ENCODE measurements at regions of chr14 and their contacts with region 1.

Region 1: GRCh38 chr14:52299692-52300278 is 14.3 kb upstream of the PTGER2 start:
- DNase-seq: no peak
- H3K4me3 Mint-ChIP-seq: no peak overlapping the region
- H3K27ac Mint-ChIP-seq: no peak overlapping the region
- H3K4me1 Mint-ChIP-seq: peaks cover 62% of the 10 kb centered on the region
- H3K27me3 Mint-ChIP-seq: peaks cover 16% of the 10 kb centered on the region

Region 2: DNA sequence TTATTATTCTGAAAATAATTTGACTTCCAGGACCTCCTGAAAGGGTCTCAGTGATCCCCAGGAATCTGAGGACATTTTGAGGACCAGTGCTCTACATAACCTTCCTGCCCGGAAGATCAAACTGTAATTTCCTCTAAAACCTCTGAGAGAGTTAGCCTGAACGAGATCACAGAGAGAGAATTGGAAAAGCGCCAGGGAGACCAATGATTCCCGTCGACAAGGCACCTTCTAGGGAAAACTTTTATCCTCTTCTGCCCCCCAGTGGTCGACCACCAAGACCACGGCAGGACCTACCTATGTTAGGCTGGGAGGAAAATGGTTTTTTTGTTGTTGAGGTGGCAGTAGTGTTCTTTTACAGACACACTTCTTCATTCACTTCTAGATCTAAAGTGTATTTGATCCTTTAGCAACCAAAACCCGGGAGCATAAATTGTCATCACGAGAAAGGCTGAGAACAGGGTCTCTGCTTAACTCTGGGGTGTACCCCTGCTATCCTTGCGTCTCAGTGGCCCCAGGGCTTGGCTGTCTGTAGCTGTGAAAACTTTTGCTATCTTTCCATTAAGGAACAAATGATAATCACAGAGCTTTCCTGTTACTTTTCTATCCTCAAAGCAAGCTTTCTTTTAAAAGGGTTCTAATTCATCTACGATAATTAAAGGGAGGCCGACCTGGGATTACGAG is 168.0 kb before region 1 on chr14:
- CTCF ChIA-PET with region 1: no interaction called
- DNase-seq: peak; percentile 56
- H3K4me3 Mint-ChIP-seq: no peak overlapping the region
- H3K27ac Mint-ChIP-seq: no peak overlapping the region
- H3K4me1 Mint-ChIP-seq: no peaks in the 10 kb centered on the region
- H3K27me3 Mint-ChIP-seq: peaks cover 37% of the 10 kb centered on the region

Region 3: GRCh38 chr14:52227619-52228222 is 72.1 kb before region 1 on chr14:
- CTCF ChIA-PET with region 1: no interaction called
- DNase-seq: no peak
- H3K4me3 Mint-ChIP-seq: no peak overlapping the region
- H3K27ac Mint-ChIP-seq: no peak overlapping the region
- H3K4me1 Mint-ChIP-seq: peaks cover 2% of the 10 kb centered on the region
- H3K27me3 Mint-ChIP-seq: peaks cover 7% of the 10 kb centered on the region

Region 4: GRCh38 chr14:52310541-52310940 is 10.8 kb after region 1 on chr14:
- CTCF ChIA-PET with region 1: interaction called, 16 read pairs
- DNase-seq: no peak
- H3K4me3 Mint-ChIP-seq: peak overlapping the region; percentile 95
- H3K27ac Mint-ChIP-seq: no peak overlapping the region
- H3K4me1 Mint-ChIP-seq: peaks cover 62% of the 10 kb centered on the region
- H3K27me3 Mint-ChIP-seq: peaks cover 19% of the 10 kb centered on the region

Region 5: DNA sequence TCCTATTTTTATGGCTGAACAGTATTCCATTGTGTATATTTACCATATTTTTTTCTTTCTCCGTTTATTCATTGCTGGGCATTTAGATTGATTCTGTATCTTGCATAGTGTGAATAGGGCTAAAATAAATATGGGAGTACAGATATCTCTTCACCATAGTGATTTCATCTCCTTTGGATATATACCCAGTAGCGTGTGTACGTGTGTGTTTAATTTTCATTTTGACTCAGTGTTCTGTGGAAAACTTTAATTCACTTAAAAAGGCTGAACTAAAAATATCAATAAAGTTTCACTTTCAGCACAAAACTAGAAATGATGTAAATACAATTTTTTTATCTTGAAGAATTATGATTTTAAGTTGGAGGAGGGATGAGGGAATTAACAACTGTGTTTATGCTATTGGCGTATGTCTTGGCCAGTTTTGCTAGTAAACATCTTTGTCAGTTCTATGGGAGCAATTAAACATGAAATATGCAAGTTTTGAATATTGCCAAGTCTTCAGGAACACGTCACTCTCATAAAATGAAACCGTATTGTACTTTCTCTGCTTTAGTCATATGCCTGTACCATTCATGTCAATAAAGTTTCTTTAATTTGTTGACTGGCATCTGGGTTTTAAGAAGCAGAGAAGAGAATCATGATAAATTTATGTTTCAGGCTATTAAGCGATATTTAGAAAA is 114.1 kb after region 1 on chr14:
- CTCF ChIA-PET with region 1: interaction called, 16 read pairs
- DNase-seq: no peak
- H3K4me3 Mint-ChIP-seq: peak overlapping the region; percentile 11
- H3K27ac Mint-ChIP-seq: peak overlapping the region; percentile 83
- H3K4me1 Mint-ChIP-seq: peaks cover 76% of the 10 kb centered on the region
- H3K27me3 Mint-ChIP-seq: no peaks in the 10 kb centered on the region

Region 6: DNA sequence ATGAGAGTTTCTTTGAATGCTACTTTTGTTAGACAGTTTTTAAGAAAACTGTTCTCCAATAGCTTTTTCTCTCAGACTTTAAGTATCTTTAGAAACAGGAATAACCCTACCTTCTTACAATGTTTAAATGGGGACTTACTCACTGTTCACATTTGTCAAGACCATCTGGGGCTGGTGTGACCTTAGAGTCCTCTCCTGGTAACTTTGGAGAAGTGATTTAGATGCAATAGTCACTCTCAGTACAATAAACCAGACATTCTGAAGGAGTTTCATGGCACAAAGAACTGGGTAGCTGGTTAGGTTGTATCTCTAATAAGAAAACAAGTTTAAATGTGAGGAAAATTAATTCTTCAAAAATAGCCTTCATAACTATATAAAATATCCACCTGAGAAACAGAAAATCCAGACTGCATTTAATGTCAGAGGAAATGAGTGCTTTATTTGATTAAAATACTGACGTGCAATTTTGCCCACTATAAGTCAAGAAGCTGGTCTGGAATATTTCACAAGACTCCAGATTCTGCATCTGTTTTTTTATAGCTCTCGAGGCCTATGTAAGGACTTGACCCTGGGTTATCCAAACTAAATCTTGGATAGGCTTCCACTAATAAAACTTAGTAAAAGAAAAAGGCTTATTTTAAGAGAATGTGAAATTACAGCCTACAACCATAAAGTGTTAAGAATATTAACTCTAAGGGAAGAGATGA is 123.0 kb after region 1 on chr14:
- CTCF ChIA-PET with region 1: interaction called, 10 read pairs
- DNase-seq: no peak
- H3K4me3 Mint-ChIP-seq: no peak overlapping the region
- H3K27ac Mint-ChIP-seq: no peak overlapping the region
- H3K4me1 Mint-ChIP-seq: peaks cover 23% of the 10 kb centered on the region
- H3K27me3 Mint-ChIP-seq: peaks cover 3% of the 10 kb centered on the region